WTC11 (cell line): ENCODE measurements at regions of chr1 and their contacts with region 1.

Region 1: DNA sequence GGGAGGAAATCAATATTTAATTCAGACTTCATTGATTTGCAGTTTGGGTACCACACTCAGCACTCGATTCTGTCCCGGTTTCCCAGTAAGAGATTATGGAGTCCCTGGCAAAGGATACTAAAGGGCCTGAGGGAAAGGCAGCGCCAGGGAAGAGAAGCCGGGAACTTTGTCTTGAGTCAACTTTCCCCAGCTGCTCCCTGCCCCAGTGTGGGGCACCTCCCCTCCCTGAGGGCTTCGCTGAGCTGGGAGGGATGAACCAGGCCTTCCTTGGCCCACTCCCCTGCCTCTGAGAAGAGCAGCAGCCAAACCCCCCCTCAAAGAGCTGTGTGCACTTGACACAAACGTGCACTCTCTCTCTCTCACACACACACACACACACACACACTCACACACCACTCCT is 32.6 kb downstream of the OPTC start:
- DNase-seq: no peak
- ATAC-seq: no peak
- H3K4me3 Mint-ChIP-seq: no peak overlapping the region
- H3K27ac Mint-ChIP-seq: no peak overlapping the region; the same call in 1 of the 2 replicates
- H3K4me1 Mint-ChIP-seq: peaks cover 28% of the 10 kb centered on the region
- H3K27me3 Mint-ChIP-seq: peaks cover 15% of the 10 kb centered on the region
- CTCF ChIP-seq: no peak

Region 2: GRCh38 chr1:203499643-203500270 is 26.8 kb before region 1 on chr1:
- CTCF ChIA-PET with region 1: no interaction called
- POLR2A ChIA-PET with region 1: no interaction called
- DNase-seq: no peak
- ATAC-seq: no peak
- H3K4me3 Mint-ChIP-seq: no peak overlapping the region
- H3K27ac Mint-ChIP-seq: no peak overlapping the region
- H3K4me1 Mint-ChIP-seq: peaks cover 5% of the 10 kb centered on the region
- H3K27me3 Mint-ChIP-seq: no peaks in the 10 kb centered on the region; the same call in 1 of the 2 replicates
- CTCF ChIP-seq: no peak

Region 3: DNA sequence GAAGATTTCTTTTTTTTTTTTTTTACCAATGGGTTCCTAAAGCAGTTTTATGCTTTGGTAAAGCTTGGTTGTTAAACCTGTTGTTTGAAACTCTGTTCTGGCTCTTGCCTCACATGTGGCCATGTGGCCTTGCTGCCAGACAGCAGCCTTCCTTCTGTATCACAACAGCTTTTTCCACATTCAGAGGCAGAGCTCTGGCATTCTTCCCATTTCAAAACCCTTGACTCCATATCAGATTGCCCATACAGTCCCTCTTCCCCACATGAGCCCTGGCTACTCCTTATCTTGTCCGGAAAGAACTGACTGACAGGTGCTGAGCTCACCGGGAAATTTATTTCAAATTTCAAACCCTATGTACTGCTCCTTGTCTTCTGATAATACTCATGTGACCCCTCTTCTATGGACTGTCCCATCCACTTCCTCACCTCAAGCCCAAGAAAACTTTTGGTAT is 199.9 kb after region 1 on chr1:
- CTCF ChIA-PET with region 1: no interaction called
- POLR2A ChIA-PET with region 1: interaction called, 12 read pairs
- DNase-seq: no peak
- ATAC-seq: no peak
- H3K4me3 Mint-ChIP-seq: no peak overlapping the region
- H3K27ac Mint-ChIP-seq: no peak overlapping the region
- H3K4me1 Mint-ChIP-seq: no peaks in the 10 kb centered on the region
- H3K27me3 Mint-ChIP-seq: no peaks in the 10 kb centered on the region
- CTCF ChIP-seq: no peak